Activated CD4-positive, alpha-beta T cell treated with anti-CD3 and anti-CD28 coated beads, Interleukin-2, amount 10 ng/mL, durations not matched to agents 24 days and 14 days (primary cell): ENCODE measurements at regions of chr1 and their contacts with region 1.

Region 1: GRCh38 chr1:183956559-183957188 is 80.9 kb downstream of the COLGALT2 start:
- DNase-seq: peak; percentile 91
- H3K4me3 Mint-ChIP-seq: peak overlapping the region; percentile 58
- H3K27ac Mint-ChIP-seq: no peak overlapping the region
- H3K4me1 Mint-ChIP-seq: peaks cover 21% of the 10 kb centered on the region
- H3K27me3 Mint-ChIP-seq: no peaks in the 10 kb centered on the region

Region 2: DNA sequence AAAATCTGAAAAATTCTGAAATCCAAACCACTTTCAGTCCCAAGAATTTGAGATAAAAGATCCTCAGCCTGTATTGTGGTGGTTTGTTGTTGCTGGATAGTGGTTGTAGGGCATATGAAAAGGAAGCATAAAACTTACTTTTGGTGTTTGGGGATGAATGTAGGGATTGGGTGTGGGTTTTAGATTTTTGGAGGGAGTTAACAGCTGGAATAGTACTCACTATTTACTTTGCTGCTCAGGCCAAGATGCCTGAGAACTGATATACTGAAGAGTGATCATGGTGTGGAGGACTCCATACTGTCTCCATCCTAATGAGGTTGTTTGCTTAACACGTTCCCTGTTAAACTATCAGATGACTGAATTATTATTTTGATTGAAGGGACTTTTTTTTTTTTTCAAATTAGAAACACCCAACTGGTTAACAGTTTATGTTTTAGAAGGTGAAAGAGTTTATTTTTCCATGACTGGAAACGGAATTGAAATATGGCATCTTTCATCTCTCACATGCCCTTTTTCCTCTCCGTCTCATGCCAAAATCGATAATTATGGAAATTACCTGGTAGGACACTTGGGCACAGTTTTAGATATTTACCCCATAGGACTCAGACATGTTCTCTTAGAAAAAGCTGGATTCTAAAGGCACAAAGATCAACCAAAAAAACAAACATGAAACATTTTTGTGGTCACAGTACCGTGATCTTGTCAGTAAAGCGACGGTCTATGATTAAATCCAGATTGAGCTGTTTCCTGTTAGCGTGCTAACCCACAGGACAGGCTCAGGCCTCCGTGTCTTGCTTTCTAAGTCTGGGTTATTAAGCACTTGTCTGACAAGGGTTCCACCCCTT is 114.5 kb before region 1 on chr1:
- intact Hi-C with region 1: loop called (anchors 1 kb)
- DNase-seq: peak; percentile 78
- H3K4me3 Mint-ChIP-seq: peak overlapping the region; percentile 65
- H3K27ac Mint-ChIP-seq: peak overlapping the region; percentile 93
- H3K4me1 Mint-ChIP-seq: peaks cover 26% of the 10 kb centered on the region
- H3K27me3 Mint-ChIP-seq: no peaks in the 10 kb centered on the region

Region 3: GRCh38 chr1:183942933-183943693 is 13.6 kb before region 1 on chr1:
- intact Hi-C with region 1: no loop called
- DNase-seq: no peak
- H3K4me3 Mint-ChIP-seq: no peak overlapping the region
- H3K27ac Mint-ChIP-seq: no peak overlapping the region
- H3K4me1 Mint-ChIP-seq: peaks cover 3% of the 10 kb centered on the region
- H3K27me3 Mint-ChIP-seq: peaks cover 7% of the 10 kb centered on the region

Region 4: DNA sequence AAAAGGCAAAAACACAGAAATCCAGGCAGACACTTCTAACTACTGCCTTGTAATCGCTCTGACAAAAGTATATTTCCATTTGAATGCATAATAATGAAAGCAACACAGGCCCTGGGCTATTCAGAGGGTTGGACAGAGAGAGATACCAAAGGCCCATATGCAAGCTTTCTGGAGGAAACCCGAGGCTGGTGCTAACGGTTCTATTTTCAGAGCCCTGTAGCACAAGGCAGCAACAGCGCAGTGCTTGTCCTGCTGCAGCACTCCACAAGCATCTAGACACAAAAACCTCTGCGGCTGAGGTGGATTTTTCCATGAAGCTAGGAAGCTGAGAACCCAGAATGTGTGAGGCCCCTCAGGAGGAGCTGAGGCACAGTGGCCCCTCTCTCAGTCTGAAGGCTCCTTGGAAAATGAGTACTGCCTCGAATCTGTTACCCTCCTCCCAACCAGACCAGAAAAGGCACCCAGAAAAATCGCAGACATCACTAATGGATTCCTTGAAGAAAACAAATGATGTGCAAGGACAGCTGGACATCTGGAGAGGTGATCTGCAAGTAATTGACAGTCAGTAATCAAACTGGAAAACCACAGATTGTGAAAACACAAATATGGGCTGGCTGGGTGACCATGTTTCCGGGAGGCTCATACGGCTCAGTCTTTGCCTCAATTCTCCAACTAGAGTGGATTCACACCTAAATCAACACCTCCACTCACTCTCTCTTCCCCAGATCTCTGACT is 26.9 kb after region 1 on chr1:
- intact Hi-C with region 1: no loop called
- DNase-seq: peak; percentile 33
- H3K4me3 Mint-ChIP-seq: no peak overlapping the region
- H3K27ac Mint-ChIP-seq: no peak overlapping the region
- H3K4me1 Mint-ChIP-seq: peaks cover 7% of the 10 kb centered on the region
- H3K27me3 Mint-ChIP-seq: peaks cover 2% of the 10 kb centered on the region

Region 5: GRCh38 chr1:184036517-184036949 is 79.9 kb after region 1 on chr1:
- intact Hi-C with region 1: loop called (anchors 2 kb)
- DNase-seq: peak; percentile 64
- H3K4me3 Mint-ChIP-seq: peak overlapping the region; percentile 69
- H3K27ac Mint-ChIP-seq: no peak overlapping the region
- H3K4me1 Mint-ChIP-seq: peaks cover 14% of the 10 kb centered on the region
- H3K27me3 Mint-ChIP-seq: peaks cover 71% of the 10 kb centered on the region

Region 6: DNA sequence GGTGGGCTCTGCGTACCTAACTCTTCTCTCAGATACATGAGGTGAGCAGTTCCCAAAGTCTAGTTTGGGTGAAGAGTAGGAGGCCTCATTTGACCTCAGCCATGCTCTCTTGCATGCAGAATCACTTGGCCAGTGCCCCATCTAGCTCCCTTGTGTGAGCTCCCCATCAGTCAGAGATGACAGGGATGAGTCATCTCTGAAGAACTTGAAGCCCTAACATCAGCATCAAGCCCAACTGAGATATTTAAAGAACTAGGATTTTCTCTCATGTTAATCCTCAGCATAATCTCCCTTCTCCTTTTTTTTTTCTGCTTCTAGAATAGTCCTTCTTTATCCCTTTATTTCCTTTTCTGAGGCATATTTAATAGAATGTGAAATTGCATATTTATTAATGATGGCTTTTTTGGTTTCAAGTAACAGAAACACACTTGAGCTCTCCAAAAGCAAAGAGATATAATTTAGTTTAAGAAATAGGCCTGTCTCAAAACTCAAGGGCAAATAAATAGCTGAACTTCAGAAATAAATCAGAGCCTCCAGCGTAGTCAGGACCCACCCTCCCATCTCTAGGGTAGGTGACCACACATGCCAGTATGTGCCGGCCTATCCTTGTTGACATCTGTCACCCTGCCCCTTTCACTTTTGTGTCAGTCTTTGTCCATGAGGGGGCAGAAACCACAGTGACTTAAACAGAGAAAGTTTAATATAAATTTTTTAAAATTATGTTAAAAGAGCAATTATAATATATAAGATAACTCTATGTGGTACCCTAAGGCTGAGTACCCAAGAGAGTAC is 207.2 kb after region 1 on chr1:
- intact Hi-C with region 1: loop called (anchors 1 kb)
- DNase-seq: peak; percentile 61
- H3K4me3 Mint-ChIP-seq: no peak overlapping the region
- H3K27ac Mint-ChIP-seq: no peak overlapping the region
- H3K4me1 Mint-ChIP-seq: peaks cover 16% of the 10 kb centered on the region
- H3K27me3 Mint-ChIP-seq: peaks cover 2% of the 10 kb centered on the region